Naive thymus-derived CD4-positive, alpha-beta T cell (primary cell): ENCODE measurements at regions of chr10 and their contacts with region 1.

Region 1: GRCh38 chr10:87861953-87862678 is 1.2 kb downstream of the KLLN start:
- DNase-seq: peak; percentile 85 to 95 (median 93)
- ATAC-seq: peak; percentile 86
- H3K4me3 ChIP-seq: peak overlapping the region; percentile 90
- H3K4me3 Mint-ChIP-seq: peak overlapping the region; percentile 91 to 100 (median 96)
- H3K27ac ChIP-seq: peak overlapping the region; percentile 75
- H3K27ac Mint-ChIP-seq: peak overlapping the region; percentile 90 to 99 (median 97)
- H3K4me1 ChIP-seq: peaks cover 6 to 16% of the 10 kb centered on the region in 2 donors
- H3K4me1 Mint-ChIP-seq: peaks cover 25 to 36% (median 32%) of the 10 kb centered on the region in 7 donors
- H3K27me3 ChIP-seq: no peaks in the 10 kb centered on the region
- H3K27me3 Mint-ChIP-seq: no peaks in the 10 kb centered on the region

Region 2: GRCh38 chr10:87094373-87095235 is 767.5 kb before region 1 on chr10 and contains the starts of genes GLUD1 and SHLD2:
- CTCF ChIA-PET with region 1: no interaction called
- POLR2A ChIA-PET with region 1: no interaction called
- intact Hi-C with region 1: loop called (anchors 10 kb)
- DNase-seq: peak; percentile 78 to 94 (median 84)
- ATAC-seq: peak; percentile 81
- H3K4me3 ChIP-seq: peak within 1 kb of the TSS; percentile 74
- H3K4me3 Mint-ChIP-seq: peak within 1 kb of the TSS; percentile 89 to 97 (median 94)
- H3K27ac ChIP-seq: peak within 1 kb of the TSS; percentile 88
- H3K27ac Mint-ChIP-seq: peak within 1 kb of the TSS; percentile 89 to 97 (median 94)
- H3K4me1 ChIP-seq: peaks cover 12 to 27% of the 10 kb centered on the region in 2 donors
- H3K4me1 Mint-ChIP-seq: peaks cover 38 to 65% (median 52%) of the 10 kb centered on the region in 7 donors
- H3K27me3 ChIP-seq: no peaks in the 10 kb centered on the region
- H3K27me3 Mint-ChIP-seq: no peaks in the 10 kb centered on the region
- total RNA-seq, gene GLUD1: 70.2 to 98.1 (median 73.2) TPM
- total RNA-seq, gene SHLD2: 19.3 to 31.4 (median 21.1) TPM

Region 3: GRCh38 chr10:87700031-87700796 is 161.9 kb before region 1 on chr10:
- CTCF ChIA-PET with region 1: no interaction called
- POLR2A ChIA-PET with region 1: no interaction called
- intact Hi-C with region 1: no loop called
- DNase-seq: no peak
- ATAC-seq: no peak
- H3K4me3 ChIP-seq: no peak overlapping the region
- H3K4me3 Mint-ChIP-seq: no peak overlapping the region
- H3K27ac ChIP-seq: no peak overlapping the region
- H3K27ac Mint-ChIP-seq: no peak overlapping the region
- H3K4me1 ChIP-seq: no peaks in the 10 kb centered on the region
- H3K4me1 Mint-ChIP-seq: peaks cover 0 to 2% (median 0%) of the 10 kb centered on the region in 7 donors
- H3K27me3 ChIP-seq: no peaks in the 10 kb centered on the region
- H3K27me3 Mint-ChIP-seq: peaks cover 0 to 25% (median 11%) of the 10 kb centered on the region in 5 donors

Region 4: GRCh38 chr10:87915989-87916388 is 53.9 kb after region 1 on chr10:
- CTCF ChIA-PET with region 1: no interaction called
- POLR2A ChIA-PET with region 1: interaction called, 6 read pairs
- intact Hi-C with region 1: loop called (anchors 2 to 5 kb)
- DNase-seq: no peak
- ATAC-seq: no peak
- H3K4me3 ChIP-seq: no peak overlapping the region
- H3K4me3 Mint-ChIP-seq: peak overlapping the region in 6 of 10 donors; percentile 6 to 68 (median 52)
- H3K27ac ChIP-seq: no peak overlapping the region
- H3K27ac Mint-ChIP-seq: peak overlapping the region in 2 of 9 donors; percentile 7 to 84
- H3K4me1 ChIP-seq: peaks cover 14 to 25% of the 10 kb centered on the region in 2 donors
- H3K4me1 Mint-ChIP-seq: peaks cover 35 to 74% (median 64%) of the 10 kb centered on the region in 7 donors
- H3K27me3 ChIP-seq: no peaks in the 10 kb centered on the region
- H3K27me3 Mint-ChIP-seq: no peaks in the 10 kb centered on the region

Region 5: GRCh38 chr10:88114368-88114767 is 252.3 kb after region 1 on chr10:
- CTCF ChIA-PET with region 1: interaction called, 31 read pairs
- POLR2A ChIA-PET with region 1: interaction called, 14 read pairs
- intact Hi-C with region 1: loop called (anchors 1 kb)
- DNase-seq: peak in 5 of 9 donors; percentile 11 to 48 (median 37)
- ATAC-seq: peak; percentile 74
- H3K4me3 ChIP-seq: no peak overlapping the region
- H3K4me3 Mint-ChIP-seq: peak overlapping the region in 5 of 10 donors; percentile 3 to 52 (median 32)
- H3K27ac ChIP-seq: no peak overlapping the region
- H3K27ac Mint-ChIP-seq: no peak overlapping the region
- H3K4me1 ChIP-seq: peaks cover 11 to 26% of the 10 kb centered on the region in 2 donors
- H3K4me1 Mint-ChIP-seq: peaks cover 4 to 32% (median 15%) of the 10 kb centered on the region in 7 donors
- H3K27me3 ChIP-seq: no peaks in the 10 kb centered on the region
- H3K27me3 Mint-ChIP-seq: peaks cover 0 to 12% (median 0%) of the 10 kb centered on the region in 5 donors

Region 6: DNA sequence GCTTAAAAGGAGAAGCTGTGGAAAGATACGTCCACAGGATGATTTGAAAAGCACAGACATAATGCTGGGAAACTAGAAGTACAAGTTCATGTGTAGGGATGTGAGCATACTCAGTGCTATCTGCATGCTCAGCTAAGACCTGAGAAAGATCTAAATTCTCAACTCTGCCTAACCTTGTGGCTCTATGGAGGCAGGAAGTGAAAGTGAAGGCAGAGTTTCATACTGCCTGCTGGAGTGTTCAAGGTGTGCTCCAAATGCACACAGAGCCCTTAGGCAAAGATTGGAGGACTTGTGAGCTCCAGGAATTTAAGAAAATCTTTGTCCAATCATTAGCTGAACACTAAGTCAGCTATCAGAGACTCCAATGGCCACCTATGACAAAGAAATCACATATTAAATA is 530.1 kb after region 1 on chr10:
- CTCF ChIA-PET with region 1: interaction called, 108 read pairs
- POLR2A ChIA-PET with region 1: interaction called, 104 read pairs
- intact Hi-C with region 1: loop called (anchors 1 kb)
- DNase-seq: peak in 6 of 9 donors; percentile 24 to 48 (median 35)
- ATAC-seq: peak; percentile 79
- H3K4me3 ChIP-seq: no peak overlapping the region
- H3K4me3 Mint-ChIP-seq: peak overlapping the region; percentile 0 to 77 (median 68)
- H3K27ac ChIP-seq: peak overlapping the region; percentile 31
- H3K27ac Mint-ChIP-seq: peak overlapping the region; percentile 34 to 93 (median 78)
- H3K4me1 ChIP-seq: peaks cover 13 to 32% of the 10 kb centered on the region in 2 donors
- H3K4me1 Mint-ChIP-seq: peaks cover 12 to 22% (median 14%) of the 10 kb centered on the region in 7 donors
- H3K27me3 ChIP-seq: no peaks in the 10 kb centered on the region
- H3K27me3 Mint-ChIP-seq: no peaks in the 10 kb centered on the region

Region 7: GRCh38 chr10:88828310-88828709 is 966.2 kb after region 1 on chr10:
- CTCF ChIA-PET with region 1: no interaction called
- POLR2A ChIA-PET with region 1: interaction called, 3 read pairs
- intact Hi-C with region 1: loop called (anchors 5 to 10 kb)
- DNase-seq: no peak
- ATAC-seq: no peak
- H3K4me3 ChIP-seq: no peak overlapping the region
- H3K4me3 Mint-ChIP-seq: no peak overlapping the region
- H3K27ac ChIP-seq: no peak overlapping the region
- H3K27ac Mint-ChIP-seq: peak overlapping the region in 2 of 9 donors; percentile 49 to 98
- H3K4me1 ChIP-seq: peaks cover 40 to 68% of the 10 kb centered on the region in 2 donors
- H3K4me1 Mint-ChIP-seq: peaks cover 32 to 80% (median 73%) of the 10 kb centered on the region in 7 donors
- H3K27me3 ChIP-seq: no peaks in the 10 kb centered on the region
- H3K27me3 Mint-ChIP-seq: no peaks in the 10 kb centered on the region

Region 8: GRCh38 chr10:89301721-89302445 is 1439.8 kb after region 1 on chr10 and contains the start of gene IFIT2:
- CTCF ChIA-PET with region 1: no interaction called
- POLR2A ChIA-PET with region 1: interaction called, 3 read pairs
- intact Hi-C with region 1: loop called in 1 of 2 experiments (anchors 5 kb)
- DNase-seq: peak in 7 of 9 donors; percentile 50 to 72 (median 60)
- ATAC-seq: peak; percentile 86
- H3K4me3 ChIP-seq: peak within 1 kb of the TSS; percentile 76
- H3K4me3 Mint-ChIP-seq: peak within 1 kb of the TSS; percentile 83 to 99 (median 94)
- H3K27ac ChIP-seq: peak within 1 kb of the TSS; percentile 71
- H3K27ac Mint-ChIP-seq: peak within 1 kb of the TSS; percentile 88 to 98 (median 97)
- H3K4me1 ChIP-seq: peaks cover 15 to 24% of the 10 kb centered on the region in 2 donors
- H3K4me1 Mint-ChIP-seq: peaks cover 24 to 60% (median 44%) of the 10 kb centered on the region in 7 donors
- H3K27me3 ChIP-seq: no peaks in the 10 kb centered on the region
- H3K27me3 Mint-ChIP-seq: peaks cover 0 to 25% (median 0%) of the 10 kb centered on the region in 5 donors
- total RNA-seq, gene IFIT2: 6.0 to 16.4 (median 8.4) TPM